Esophagus muscularis mucosa (tissue), 4 donors: ENCODE measurements at regions of chr17 and their contacts with region 1.

Region 1: DNA sequence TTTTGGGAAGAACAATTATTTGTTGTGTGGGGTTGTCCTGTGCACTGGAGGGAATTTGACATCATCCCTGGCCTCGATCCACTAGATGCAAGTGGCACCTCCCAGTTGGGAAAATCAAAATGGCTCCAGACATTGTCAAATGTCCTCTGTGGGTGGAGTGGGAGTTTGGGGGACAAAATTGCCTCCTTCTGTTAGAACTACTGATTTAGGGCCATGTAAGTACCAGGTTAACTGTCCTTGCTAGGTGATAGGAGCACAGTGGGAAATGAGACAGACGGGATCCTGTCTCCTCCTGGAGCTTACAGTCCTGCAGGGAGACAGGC is 56.8 kb downstream of the ARHGAP23 start:
- DNase-seq: no peak
- H3K4me3 ChIP-seq: no peak overlapping the region
- H3K27ac ChIP-seq: peak overlapping the region; percentile 55 to 69 (median 62)
- H3K4me1 ChIP-seq: peaks cover 18 to 48% (median 42%) of the 10 kb centered on the region in 4 donors
- H3K27me3 ChIP-seq: no peaks in the 10 kb centered on the region
- CTCF ChIP-seq: no peak
- EP300 ChIP-seq: no peak
- POLR2A ChIP-seq: no peak

Region 2: GRCh38 chr17:38428112-38428642 is 56.9 kb before region 1 on chr17 and contains the start of gene ARHGAP23:
- intact Hi-C with region 1: loop called (anchors 5 kb)
- DNase-seq: no peak
- H3K4me3 ChIP-seq: peak within 1 kb of the TSS; percentile 78 to 98 (median 84)
- H3K27ac ChIP-seq: peak within 1 kb of the TSS; percentile 91 to 95 (median 93)
- H3K4me1 ChIP-seq: peaks cover 75 to 98% (median 82%) of the 10 kb centered on the region in 4 donors
- H3K27me3 ChIP-seq: no peaks in the 10 kb centered on the region
- CTCF ChIP-seq: no peak
- EP300 ChIP-seq: no peak
- POLR2A ChIP-seq: peak; percentile 39
- total RNA-seq, gene ARHGAP23: 58.6 to 150 (median 104) TPM

Region 3: DNA sequence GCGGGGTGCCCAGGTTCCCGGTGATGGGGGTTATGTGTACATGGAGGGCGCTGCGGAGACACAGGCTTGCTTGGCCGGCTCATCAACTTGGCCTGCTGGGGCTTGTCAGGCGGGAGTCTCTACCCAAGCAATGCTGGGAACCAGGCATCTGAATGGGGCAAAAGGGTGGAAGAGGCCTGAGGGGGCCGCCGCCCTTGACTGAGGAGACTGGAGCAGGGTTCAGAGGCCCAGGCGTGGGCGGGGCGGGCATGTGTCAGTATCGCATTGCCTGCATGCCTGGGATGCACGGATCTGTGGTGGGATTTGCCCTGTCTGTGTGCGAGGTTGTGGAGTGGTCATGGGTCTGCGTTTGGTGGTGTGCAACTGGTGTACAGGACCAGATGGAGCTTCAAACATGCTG is 35.7 kb before region 1 on chr17:
- intact Hi-C with region 1: loop called (anchors 5 kb)
- DNase-seq: no peak
- H3K4me3 ChIP-seq: no peak overlapping the region
- H3K27ac ChIP-seq: peak overlapping the region; percentile 63 to 82 (median 74)
- H3K4me1 ChIP-seq: peaks cover 64 to 79% (median 70%) of the 10 kb centered on the region in 4 donors
- H3K27me3 ChIP-seq: no peaks in the 10 kb centered on the region
- CTCF ChIP-seq: no peak
- EP300 ChIP-seq: no peak
- POLR2A ChIP-seq: no peak